ENCODE measurements at regions of chr22 and their contacts with region 1.

Region 1: GRCh38 chr22:21045585-21046294 is at the start of gene LRRC74B:
- DNase-seq: peak; percentile 88 to 93 (median 92)
- ATAC-seq: peak; percentile 94 to 99 (median 96)
- H3K4me3 ChIP-seq: peak within 1 kb of the TSS; percentile 11 to 60 (median 54)
- H3K27ac ChIP-seq: no peak within 1 kb of the TSS
- H3K4me1 ChIP-seq: peaks cover 0 to 19% (median 7%) of the 10 kb centered on the region in 12 donors
- H3K27me3 ChIP-seq: no peaks in the 10 kb centered on the region
- CTCF ChIP-seq: no peak
- POLR2A ChIP-seq: no peak
- total RNA-seq, gene LRRC74B: not detected

Region 2: DNA sequence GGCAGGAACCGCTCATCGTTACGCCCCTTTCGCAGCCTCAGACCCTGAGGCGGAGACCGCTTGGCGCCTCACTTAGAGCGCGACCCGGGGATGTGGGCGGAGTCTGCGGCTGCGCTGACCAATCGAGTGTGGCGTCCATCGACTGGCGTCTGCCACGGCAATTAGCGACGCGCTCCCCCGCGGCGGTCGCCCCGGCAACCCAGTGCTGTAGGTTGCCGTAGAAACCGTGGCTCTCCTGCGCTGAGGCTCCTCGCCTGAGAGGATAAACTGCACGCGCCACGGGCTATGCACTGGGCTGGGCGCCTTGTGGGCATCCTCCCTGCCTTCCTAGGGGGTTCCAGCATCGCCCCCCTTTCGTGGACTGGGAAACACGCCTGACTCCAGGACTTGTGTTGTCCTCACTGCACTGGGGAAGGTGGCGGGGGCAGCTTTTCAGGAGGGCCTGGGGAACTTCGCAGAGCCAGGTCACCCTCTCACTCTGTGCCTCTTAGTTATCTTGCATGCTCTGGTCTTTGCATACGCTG is 31.5 kb before region 1 on chr22:
- intact Hi-C with region 1: loop called in 1 of 10 experiments (anchors 5 kb)
- DNase-seq: peak; percentile 92 to 94 (median 92)
- ATAC-seq: peak; percentile 83 to 94 (median 90)
- H3K4me3 ChIP-seq: peak overlapping the region in 11 of 12 donors; percentile 18 to 64 (median 55)
- H3K27ac ChIP-seq: peak overlapping the region in 10 of 12 donors; percentile 39 to 84 (median 68)
- H3K4me1 ChIP-seq: peaks cover 3 to 27% (median 20%) of the 10 kb centered on the region in 12 donors
- H3K27me3 ChIP-seq: no peaks in the 10 kb centered on the region
- CTCF ChIP-seq: no peak
- POLR2A ChIP-seq: peak in 1 of 2 donors; percentile 29

Region 3: GRCh38 chr22:21074188-21074724 is 28.5 kb after region 1 on chr22:
- intact Hi-C with region 1: no loop called
- DNase-seq: no peak
- ATAC-seq: peak in 1 of 4 donors; percentile 45
- H3K4me3 ChIP-seq: no peak overlapping the region
- H3K27ac ChIP-seq: no peak overlapping the region
- H3K4me1 ChIP-seq: no peaks in the 10 kb centered on the region
- H3K27me3 ChIP-seq: peaks cover 0 to 6% (median 0%) of the 10 kb centered on the region in 9 donors
- CTCF ChIP-seq: no peak
- POLR2A ChIP-seq: no peak